CD14-positive monocyte (primary cell): ENCODE measurements at regions of chr16 and their contacts with region 1.

Region 1: GRCh38 chr16:1308977-1309885 is at the start of gene UBE2I:
- DNase-seq: peak; percentile 90 to 98 (median 94)
- H3K4me3 ChIP-seq: peak within 1 kb of the TSS; percentile 79 to 94 (median 87)
- H3K4me3 Mint-ChIP-seq: peak within 1 kb of the TSS; percentile 95 to 98
- H3K27ac ChIP-seq: peak within 1 kb of the TSS; percentile 99 to 100
- H3K27ac Mint-ChIP-seq: peak within 1 kb of the TSS; percentile 96 to 100 (median 99)
- H3K4me1 ChIP-seq: peaks cover 30 to 33% of the 10 kb centered on the region in 2 donors
- H3K4me1 Mint-ChIP-seq: peaks cover 38% of the 10 kb centered on the region
- H3K27me3 ChIP-seq: no peaks in the 10 kb centered on the region
- H3K27me3 Mint-ChIP-seq: no peaks in the 10 kb centered on the region
- CTCF ChIP-seq: no peak
- polyA plus RNA-seq, gene UBE2I: 76.8 to 112 (median 88.8) TPM

Region 2: GRCh38 chr16:589658-590159 is 719.5 kb before region 1 on chr16 and contains the start of gene RAB40C:
- intact Hi-C with region 1: no loop called
- DNase-seq: peak; percentile 96 to 100 (median 99)
- H3K4me3 ChIP-seq: peak within 1 kb of the TSS; percentile 85 to 92 (median 86)
- H3K4me3 Mint-ChIP-seq: peak within 1 kb of the TSS; percentile 91 to 99
- H3K27ac ChIP-seq: peak within 1 kb of the TSS; percentile 86 to 91
- H3K27ac Mint-ChIP-seq: peak within 1 kb of the TSS; percentile 98 to 100 (median 99)
- H3K4me1 ChIP-seq: peaks cover 58 to 63% of the 10 kb centered on the region in 2 donors
- H3K4me1 Mint-ChIP-seq: peaks cover 54% of the 10 kb centered on the region
- H3K27me3 ChIP-seq: peaks cover 0 to 7% of the 10 kb centered on the region in 2 donors
- H3K27me3 Mint-ChIP-seq: peaks cover 3 to 15% (median 12%) of the 10 kb centered on the region in 3 donors
- CTCF ChIP-seq: no peak
- polyA plus RNA-seq, gene RAB40C: 10.0 to 22.6 (median 10.9) TPM

Region 3: DNA sequence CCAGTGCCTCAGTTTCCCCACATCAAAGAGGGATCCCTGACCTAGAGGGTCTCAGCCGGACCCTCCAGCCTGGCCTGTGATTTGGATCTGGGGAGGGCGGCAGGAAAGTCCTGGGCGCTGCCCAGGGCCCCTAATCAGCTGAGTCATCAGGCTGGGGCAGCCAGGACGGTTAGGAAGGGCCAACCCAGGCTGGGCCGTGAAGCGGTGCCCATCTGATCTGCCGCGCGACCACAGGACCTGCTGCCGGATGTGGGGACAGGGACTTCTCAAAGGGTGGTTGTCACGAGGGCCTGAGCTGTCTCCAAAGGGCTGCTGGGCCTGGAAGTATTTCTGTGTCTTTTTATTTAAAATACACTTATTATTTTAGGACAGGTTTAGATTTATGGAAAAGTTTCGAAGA is 64.3 kb before region 1 on chr16:
- intact Hi-C with region 1: no loop called
- DNase-seq: peak; percentile 21 to 86 (median 53)
- H3K4me3 ChIP-seq: peak overlapping the region in 1 of 3 experiments; percentile 30
- H3K4me3 Mint-ChIP-seq: peak overlapping the region; percentile 50 to 56
- H3K27ac ChIP-seq: no peak overlapping the region
- H3K27ac Mint-ChIP-seq: peak overlapping the region in 2 of 7 donors; percentile 5 to 14
- H3K4me1 ChIP-seq: peaks cover 22 to 23% of the 10 kb centered on the region in 2 donors
- H3K4me1 Mint-ChIP-seq: peaks cover 26% of the 10 kb centered on the region
- H3K27me3 ChIP-seq: no peaks in the 10 kb centered on the region
- H3K27me3 Mint-ChIP-seq: peaks cover 0 to 12% (median 10%) of the 10 kb centered on the region in 3 donors
- CTCF ChIP-seq: no peak

Region 4: DNA sequence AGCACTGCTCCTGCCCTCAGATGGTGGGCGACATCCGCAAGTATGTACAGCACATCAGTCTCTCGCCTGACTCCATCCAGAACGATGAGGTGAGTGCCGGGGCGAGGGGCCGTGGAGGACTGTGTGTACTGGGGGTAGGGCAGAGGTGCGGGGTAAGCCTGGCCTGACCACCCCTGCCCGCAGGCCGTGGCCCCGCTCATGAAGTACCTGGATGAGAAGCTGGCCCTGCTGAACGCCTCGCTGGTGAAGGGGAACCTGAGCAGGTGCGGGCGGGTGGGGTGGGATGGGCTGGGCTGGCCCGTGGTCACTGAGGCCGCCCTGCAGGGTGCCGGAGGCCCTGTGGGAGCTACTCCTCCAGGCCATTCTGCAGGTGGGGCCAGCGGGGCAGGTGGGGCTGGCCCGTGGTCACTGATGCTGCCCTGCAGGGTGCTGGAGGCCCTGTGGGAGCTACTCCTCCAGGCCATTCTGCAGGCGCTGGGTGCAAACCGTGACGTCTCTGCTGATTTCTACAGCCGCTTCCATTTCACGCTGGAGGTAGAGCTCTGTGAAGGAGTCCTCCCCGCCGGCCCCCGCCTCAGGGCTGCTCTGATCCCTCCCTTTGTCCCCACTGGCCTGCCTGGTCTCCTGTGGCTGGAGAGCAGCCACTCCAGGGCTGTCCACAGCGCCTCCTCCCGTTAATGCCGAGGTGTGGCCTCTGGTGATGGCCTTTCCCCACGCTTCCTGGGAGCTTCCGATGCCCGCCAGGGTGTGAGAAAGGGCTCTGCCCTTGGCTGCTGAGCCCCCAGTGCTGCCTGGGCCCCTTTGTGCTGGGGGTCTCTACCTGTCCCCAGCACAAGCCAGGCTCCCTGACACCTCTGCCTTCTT is 37.4 kb after region 1 on chr16:
- intact Hi-C with region 1: loop called in 1 of 2 experiments (anchors 5 kb)
- DNase-seq: no peak
- H3K4me3 ChIP-seq: no peak overlapping the region
- H3K4me3 Mint-ChIP-seq: no peak overlapping the region
- H3K27ac ChIP-seq: no peak overlapping the region
- H3K27ac Mint-ChIP-seq: no peak overlapping the region
- H3K4me1 ChIP-seq: peaks cover 22 to 29% of the 10 kb centered on the region in 2 donors
- H3K4me1 Mint-ChIP-seq: peaks cover 22% of the 10 kb centered on the region
- H3K27me3 ChIP-seq: no peaks in the 10 kb centered on the region
- H3K27me3 Mint-ChIP-seq: peaks cover under 1 to 6% (median 2%) of the 10 kb centered on the region in 3 donors
- CTCF ChIP-seq: no peak

Region 5: DNA sequence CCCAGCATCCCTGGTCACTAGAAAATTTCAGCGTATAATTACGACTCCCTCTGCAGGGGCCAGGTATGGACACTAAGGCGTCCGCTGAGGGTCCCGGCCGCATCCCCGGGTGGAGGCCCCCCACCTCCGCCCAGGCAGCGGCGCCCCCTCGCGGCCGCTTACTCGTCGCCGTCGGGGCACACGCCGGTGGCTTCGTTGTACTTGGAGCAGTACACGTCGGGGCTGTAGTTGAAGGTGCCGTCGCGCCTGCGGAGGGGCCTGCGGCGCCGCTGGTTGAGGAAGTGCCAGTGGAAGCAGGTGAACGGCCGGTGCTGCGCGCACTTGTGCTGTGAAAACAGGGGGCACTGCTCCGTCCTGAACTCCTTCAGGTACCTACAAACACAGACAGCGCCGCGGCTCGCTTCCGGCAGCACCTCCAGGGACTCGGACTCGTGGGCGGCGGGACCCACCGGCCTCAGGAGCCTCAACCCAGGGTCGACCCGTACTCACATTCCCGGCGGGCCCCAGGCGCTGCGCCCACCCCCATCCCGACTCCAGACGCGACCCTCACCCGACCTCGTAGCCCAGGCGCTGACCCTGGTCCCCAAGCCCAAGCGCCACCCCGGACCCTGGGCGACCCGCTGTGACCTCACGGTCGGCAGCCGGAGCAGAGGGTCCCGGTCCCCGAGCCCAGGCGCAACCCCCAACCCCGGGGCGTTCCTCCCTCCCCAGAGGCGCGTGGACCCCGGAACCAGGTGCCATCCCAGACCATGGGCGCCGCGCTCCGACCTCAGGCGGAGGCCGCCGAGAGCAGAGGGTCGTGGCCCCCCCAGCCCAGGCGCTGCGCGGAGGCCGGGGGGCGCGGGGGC is 104.7 kb after region 1 on chr16:
- intact Hi-C with region 1: loop called in 1 of 2 experiments (anchors 10 kb)
- DNase-seq: peak; percentile 39 to 60 (median 49)
- H3K4me3 ChIP-seq: peak overlapping the region; percentile 80 to 94 (median 85)
- H3K4me3 Mint-ChIP-seq: peak overlapping the region; percentile 89
- H3K27ac ChIP-seq: peak overlapping the region; percentile 25 to 83
- H3K27ac Mint-ChIP-seq: peak overlapping the region; percentile 38 to 91 (median 85)
- H3K4me1 ChIP-seq: peaks cover 13 to 20% of the 10 kb centered on the region in 2 donors
- H3K4me1 Mint-ChIP-seq: peaks cover 13% of the 10 kb centered on the region
- H3K27me3 ChIP-seq: no peaks in the 10 kb centered on the region
- H3K27me3 Mint-ChIP-seq: peaks cover 0 to 1% (median 0%) of the 10 kb centered on the region in 3 donors
- CTCF ChIP-seq: peak; percentile 76